Head of caudate nucleus (tissue), 42 donors: ENCODE measurements at regions of chrX and their contacts with region 1.

Region 1: DNA sequence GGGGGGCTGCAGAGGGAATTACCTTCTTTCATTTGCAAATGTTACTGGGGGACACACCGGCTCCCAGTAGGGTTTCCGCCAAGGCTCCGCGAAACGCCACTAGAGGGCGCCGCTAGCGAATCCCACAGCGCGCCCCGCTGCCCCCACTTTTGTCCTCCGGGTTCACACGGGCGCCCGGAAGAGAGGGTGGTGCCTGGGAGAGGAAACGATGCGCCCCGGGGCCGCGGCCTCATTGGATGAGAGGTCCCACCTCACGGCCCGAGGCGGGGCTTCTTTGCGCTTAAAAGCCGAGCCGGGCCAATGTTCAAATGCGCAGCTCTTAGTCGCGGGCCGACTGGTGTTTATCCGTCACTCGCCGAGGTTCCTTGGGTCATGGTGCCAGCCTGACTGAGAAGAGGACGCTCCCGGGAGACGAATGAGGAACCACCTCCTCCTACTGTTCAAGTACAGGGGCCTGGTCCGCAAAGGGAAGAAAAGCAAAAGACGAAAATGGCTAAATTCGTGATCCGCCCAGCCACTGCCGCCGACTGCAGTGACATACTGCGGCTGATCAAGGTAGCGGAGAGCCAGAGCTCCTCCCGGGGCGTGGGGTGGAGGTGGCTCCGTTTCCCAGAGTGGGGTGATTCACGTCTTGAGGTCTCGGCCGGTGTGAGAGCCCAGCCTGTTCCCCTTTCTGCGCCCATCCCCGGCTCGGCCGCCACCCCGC is at the start of gene SAT1:
- DNase-seq: peak; percentile 91 to 98 (median 95)

Region 2: DNA sequence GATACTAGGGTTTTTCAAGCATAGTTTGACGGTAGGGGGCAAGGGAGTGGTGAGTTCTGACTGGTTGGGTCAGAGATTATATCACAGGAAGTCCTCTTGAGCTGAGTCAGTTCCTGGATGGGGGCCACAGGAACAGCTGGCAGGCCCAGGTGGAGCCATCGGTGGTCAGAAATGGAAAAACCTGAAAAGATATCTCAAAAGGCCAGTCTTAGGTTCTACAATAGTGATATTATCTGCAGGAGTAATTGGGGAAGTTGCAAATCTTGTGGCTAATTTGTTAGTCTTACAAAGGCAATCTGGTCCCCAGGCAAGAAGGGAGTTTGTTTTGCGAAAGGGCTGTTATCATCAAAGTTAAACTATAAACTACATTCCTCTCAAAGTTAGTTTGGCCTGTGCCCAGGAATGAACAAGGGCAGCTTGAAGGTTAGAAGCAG is 289.1 kb before region 1 on chrX:
- intact Hi-C with region 1: no loop called
- DNase-seq: no peak

Region 3: DNA sequence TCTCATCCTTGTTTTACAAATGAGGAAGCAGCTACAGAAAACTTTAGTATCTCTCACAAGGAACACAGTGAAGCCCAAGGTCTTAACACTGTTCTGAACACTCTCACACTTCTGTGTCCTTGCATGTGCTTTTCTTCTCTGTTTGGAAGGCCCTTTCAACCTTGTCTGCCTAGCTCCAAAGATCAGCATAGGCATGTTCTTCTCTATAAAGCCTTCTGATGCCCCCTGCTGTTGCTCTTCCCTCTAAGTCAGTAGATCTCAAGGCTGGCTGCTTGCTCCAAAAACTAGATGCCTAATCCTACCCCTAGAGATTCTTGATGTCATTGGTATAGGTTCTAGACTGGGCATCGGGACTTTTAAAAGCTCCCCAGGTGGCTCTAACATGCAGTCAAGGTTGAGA is 118.8 kb after region 1 on chrX:
- intact Hi-C with region 1: loop called (anchors 1 kb)
- DNase-seq: peak in 32 of 42 donors; percentile 13 to 80 (median 47)